Activated CD8-positive, alpha-beta T cell treated with anti-CD3 and anti-CD28 coated beads, Interleukin-2, amount 10 ng/mL, durations not matched to agents 7 days and 5 days (primary cell): ENCODE measurements at regions of chr11 and their contacts with region 1.

Region 1: GRCh38 chr11:125123947-125124617 is 12.7 kb upstream of the TMEM218 start:
- DNase-seq: peak; percentile 53
- ATAC-seq: peak; percentile 77
- H3K4me3 Mint-ChIP-seq: no peak overlapping the region
- H3K27ac Mint-ChIP-seq: no peak overlapping the region
- H3K4me1 Mint-ChIP-seq: no peaks in the 10 kb centered on the region
- H3K27me3 Mint-ChIP-seq: peaks cover 22% of the 10 kb centered on the region

Region 2: DNA sequence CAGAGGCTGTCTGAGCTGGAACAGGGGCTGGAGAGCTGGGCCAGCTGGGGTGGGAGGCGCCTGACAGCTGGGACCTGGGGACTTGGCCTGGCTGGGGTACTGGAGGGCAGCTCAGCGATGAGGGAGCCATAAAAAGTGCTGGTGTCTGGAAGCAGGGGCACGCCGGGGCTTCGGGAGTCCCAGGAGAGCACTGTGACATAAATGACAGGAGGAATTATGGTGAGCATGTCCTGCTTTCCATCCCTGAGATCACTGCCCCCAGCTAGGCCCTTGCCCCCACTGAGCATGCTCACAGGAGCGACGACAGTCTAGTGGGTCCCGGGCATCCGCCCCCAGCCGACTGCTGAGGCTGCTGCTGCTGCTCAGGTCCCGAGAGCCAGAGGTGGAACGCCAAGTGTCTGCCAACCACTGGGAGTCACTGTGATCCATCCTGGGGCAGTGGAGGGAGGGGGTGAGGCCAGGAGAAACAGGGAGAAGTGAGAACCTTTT is 232.7 kb before region 1 on chr11:
- CTCF ChIA-PET with region 1: no interaction called
- POLR2A ChIA-PET with region 1: no interaction called
- DNase-seq: no peak
- ATAC-seq: no peak
- H3K4me3 Mint-ChIP-seq: no peak overlapping the region
- H3K27ac Mint-ChIP-seq: no peak overlapping the region
- H3K4me1 Mint-ChIP-seq: no peaks in the 10 kb centered on the region
- H3K27me3 Mint-ChIP-seq: peaks cover 14% of the 10 kb centered on the region

Region 3: DNA sequence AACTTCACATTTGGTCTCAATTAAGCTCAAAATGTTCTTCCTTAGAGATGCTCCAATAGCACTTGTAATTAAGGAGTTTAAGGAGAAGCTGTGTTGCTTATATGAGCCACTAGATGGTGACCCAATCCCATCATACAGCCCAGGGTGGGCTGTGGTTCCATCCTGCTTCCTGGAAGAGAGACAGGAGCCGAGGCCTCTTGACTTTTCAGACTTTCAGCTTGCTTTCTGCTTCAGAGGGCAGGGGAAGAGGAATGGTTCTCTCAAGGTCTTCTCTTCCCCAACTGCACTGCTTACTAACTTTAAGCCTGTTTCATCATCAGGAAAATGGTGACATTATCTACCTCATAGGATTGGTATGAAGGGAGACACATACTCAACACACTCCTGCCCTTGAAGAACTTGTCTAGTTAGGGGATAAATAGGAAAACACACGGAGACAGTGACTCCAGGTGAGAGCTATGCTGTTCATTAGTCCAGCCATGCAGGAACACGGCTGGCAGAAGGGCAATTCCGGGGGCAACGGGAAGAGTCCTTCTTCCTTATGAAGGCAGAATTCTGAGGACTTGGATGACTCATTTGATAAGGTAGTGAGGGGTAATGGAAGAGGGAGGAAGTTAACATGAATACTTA is 32.7 kb before region 1 on chr11:
- CTCF ChIA-PET with region 1: interaction called, 15 read pairs
- POLR2A ChIA-PET with region 1: no interaction called
- DNase-seq: no peak
- ATAC-seq: no peak
- H3K4me3 Mint-ChIP-seq: no peak overlapping the region
- H3K27ac Mint-ChIP-seq: peak overlapping the region; percentile 20
- H3K4me1 Mint-ChIP-seq: peaks cover 8% of the 10 kb centered on the region
- H3K27me3 Mint-ChIP-seq: no peaks in the 10 kb centered on the region

Region 4: GRCh38 chr11:125105926-125106325 is 18.2 kb before region 1 on chr11:
- CTCF ChIA-PET with region 1: interaction called, 54 read pairs
- POLR2A ChIA-PET with region 1: no interaction called
- DNase-seq: no peak
- ATAC-seq: no peak
- H3K4me3 Mint-ChIP-seq: no peak overlapping the region
- H3K27ac Mint-ChIP-seq: no peak overlapping the region
- H3K4me1 Mint-ChIP-seq: peaks cover 7% of the 10 kb centered on the region
- H3K27me3 Mint-ChIP-seq: no peaks in the 10 kb centered on the region

Region 5: DNA sequence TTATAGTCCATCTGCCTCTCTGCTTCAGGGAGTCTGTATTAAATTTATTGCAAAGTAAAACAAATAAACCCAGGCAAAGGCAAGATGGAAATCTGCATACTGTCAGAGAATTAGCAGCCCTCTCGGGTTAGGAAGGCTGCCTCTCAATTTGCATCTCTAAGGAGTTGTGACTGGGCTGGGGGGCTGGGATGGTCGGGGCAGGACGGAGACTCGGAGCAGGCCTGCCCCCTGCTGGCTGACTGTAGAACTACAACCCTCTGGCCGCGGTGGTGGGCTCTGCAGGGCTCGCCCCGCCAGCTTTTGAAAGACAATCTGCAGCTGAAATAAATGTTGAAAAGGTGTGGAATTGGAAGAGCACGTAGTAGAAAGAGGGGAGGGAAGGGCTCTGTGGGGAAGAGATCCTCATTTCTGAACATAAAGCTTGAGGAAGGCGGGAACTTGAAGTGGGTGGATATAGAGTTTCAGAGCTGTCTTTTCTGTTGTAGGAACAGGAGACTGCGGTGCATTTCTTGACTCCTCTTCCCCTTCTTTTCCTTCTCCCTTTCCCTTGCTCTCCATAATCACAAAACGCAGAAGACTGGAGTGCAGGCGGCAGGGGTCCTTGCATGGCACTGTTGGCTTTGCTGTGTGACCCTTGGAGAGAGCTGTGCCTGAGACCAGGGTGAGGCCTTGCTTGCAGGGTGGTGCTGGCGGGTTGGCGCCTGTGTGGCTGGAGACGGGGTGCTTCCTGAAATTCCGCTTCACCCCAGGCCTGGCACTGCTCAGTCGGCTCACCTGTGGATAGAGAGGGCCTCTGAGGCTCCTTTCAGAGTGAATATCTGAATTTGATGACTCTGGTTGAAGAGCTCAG is 17.8 kb after region 1 on chr11:
- CTCF ChIA-PET with region 1: interaction called, 23 read pairs
- POLR2A ChIA-PET with region 1: no interaction called
- DNase-seq: peak; percentile 63
- ATAC-seq: peak; percentile 89
- H3K4me3 Mint-ChIP-seq: no peak overlapping the region
- H3K27ac Mint-ChIP-seq: no peak overlapping the region
- H3K4me1 Mint-ChIP-seq: no peaks in the 10 kb centered on the region
- H3K27me3 Mint-ChIP-seq: peaks cover 23% of the 10 kb centered on the region

Region 6: GRCh38 chr11:125192183-125192582 is 68.1 kb after region 1 on chr11:
- CTCF ChIA-PET with region 1: no interaction called
- POLR2A ChIA-PET with region 1: no interaction called
- DNase-seq: no peak
- ATAC-seq: no peak
- H3K4me3 Mint-ChIP-seq: no peak overlapping the region
- H3K27ac Mint-ChIP-seq: no peak overlapping the region
- H3K4me1 Mint-ChIP-seq: no peaks in the 10 kb centered on the region
- H3K27me3 Mint-ChIP-seq: peaks cover 36% of the 10 kb centered on the region